ENCODE measurements at regions of chr7 and their contacts with region 1.

Region 1: GRCh38 chr7:130069978-130070860 is at the start of gene KLHDC10:
- DNase-seq: peak; percentile 98
- H3K4me3 ChIP-seq: peak within 1 kb of the TSS; percentile 97
- H3K27ac ChIP-seq: peak within 1 kb of the TSS; percentile 47
- H3K4me1 ChIP-seq: peaks cover 16% of the 10 kb centered on the region
- H3K27me3 ChIP-seq: no peaks in the 10 kb centered on the region
- total RNA-seq, gene KLHDC10: 15.8 and 18.2 TPM in 2 replicates

Region 2: DNA sequence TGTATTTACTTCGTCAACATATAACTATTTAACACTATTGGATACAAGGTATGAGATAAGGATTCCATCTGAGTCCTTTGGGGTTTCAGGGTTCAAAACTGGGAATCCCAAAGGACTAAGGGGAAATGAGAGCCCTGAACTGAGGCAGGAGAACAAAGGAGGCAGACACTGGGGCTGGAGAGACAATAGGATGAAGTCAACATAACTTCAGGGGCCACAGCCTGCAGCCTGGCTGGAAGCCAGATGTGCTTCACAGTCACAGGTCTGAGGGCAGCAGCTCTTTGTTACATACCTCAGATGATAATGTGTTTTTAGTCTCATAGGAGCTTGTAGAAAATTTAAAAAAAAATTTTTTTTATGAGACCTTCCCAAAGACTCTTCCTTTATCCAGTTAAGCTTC is 385.4 kb before region 1 on chr7:
- in situ Hi-C with region 1: no loop called
- DNase-seq: no peak
- H3K4me3 ChIP-seq: no peak overlapping the region
- H3K27ac ChIP-seq: no peak overlapping the region
- H3K4me1 ChIP-seq: no peaks in the 10 kb centered on the region
- H3K27me3 ChIP-seq: no peaks in the 10 kb centered on the region

Region 3: GRCh38 chr7:130758429-130759056 is 688.3 kb after region 1 on chr7:
- in situ Hi-C with region 1: loop called (anchors 25 kb)
- DNase-seq: peak; percentile 71
- H3K4me3 ChIP-seq: no peak overlapping the region
- H3K27ac ChIP-seq: no peak overlapping the region
- H3K4me1 ChIP-seq: no peaks in the 10 kb centered on the region
- H3K27me3 ChIP-seq: no peaks in the 10 kb centered on the region